Posterior vena cava (tissue), 2 donors: ENCODE measurements at regions of chr9 and their contacts with region 1.

Region 1: DNA sequence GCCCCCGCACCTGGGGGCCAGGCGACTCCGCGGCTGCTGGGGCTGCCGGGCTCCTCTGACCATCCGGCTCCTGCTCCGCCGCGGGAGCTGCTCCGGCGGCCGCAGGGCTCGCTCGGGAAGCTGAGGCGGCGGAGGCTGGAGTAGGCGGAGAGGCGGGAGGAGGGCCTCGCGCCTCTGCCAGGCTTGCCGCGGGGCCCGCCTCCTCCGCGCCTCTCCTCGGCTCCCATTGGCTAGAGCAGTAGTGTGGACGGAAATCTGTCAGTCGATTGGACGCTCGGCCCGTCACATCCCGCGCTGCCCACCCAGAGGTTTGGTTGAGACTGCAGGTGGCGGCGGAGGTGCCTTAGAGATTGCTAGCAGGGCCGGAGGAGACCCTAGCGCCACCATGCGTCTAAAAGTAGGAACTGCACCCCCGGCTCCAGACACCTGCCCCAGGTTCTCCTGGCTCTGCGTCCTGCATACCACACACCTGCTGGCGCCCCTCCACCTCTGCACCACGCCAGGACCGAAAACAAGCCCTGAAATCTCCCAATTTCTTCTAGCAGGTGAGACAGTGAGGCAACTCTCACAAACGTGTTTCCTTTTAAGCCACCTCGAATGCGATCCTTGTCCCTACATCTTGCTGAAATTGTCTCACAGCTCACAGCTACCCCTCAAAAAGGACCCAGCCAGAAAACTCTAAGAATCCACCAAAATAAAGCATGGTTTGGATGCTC is at the start of gene SCAI:
- DNase-seq: peak; percentile 100
- total RNA-seq, gene SCAI: 6.1 to 8.2 TPM

Region 2: GRCh38 chr9:124940693-124941453 is 202.7 kb before region 1 on chr9 and contains the start of gene GOLGA1:
- intact Hi-C with region 1: loop called in 1 of 2 experiments (anchors 10 kb)
- DNase-seq: peak; percentile 99
- total RNA-seq, gene GOLGA1: 21.0 to 21.5 TPM

Region 3: DNA sequence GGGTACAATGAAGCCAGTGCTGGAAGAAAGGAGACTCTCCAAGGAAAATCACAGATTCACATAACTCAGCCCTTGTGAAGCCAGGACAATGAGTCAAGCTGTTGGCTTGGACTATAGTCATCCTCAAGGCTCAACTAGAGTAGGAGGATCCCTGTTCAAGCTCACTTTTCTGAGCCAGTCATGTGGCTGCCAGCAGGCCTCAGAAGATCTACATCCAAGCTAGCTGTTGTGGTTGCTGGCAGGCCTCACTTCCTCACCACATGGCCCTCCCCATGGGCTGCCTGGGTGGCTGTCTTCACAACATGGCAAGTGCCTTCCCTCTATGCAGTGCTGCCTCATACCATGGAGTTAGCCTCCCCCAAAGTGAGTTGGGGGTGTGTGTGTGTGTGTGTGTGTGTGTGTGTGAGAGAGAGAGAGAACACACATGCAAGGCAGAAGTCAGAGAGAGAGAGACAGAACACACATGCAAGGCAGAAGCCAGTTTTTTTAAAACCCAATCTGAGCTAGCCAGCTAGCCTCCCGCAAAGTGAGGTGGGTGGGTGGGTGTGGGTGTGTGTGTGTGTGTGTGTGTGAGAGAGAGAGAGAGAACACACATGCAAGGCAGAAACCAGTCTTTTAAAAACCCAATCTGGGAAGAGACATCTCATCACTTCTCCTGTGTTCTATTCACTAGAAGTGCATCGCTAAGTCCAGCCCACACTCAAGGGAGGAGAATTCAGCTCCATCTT is 17.4 kb before region 1 on chr9:
- intact Hi-C with region 1: loop called in 1 of 2 experiments (anchors 1 kb)
- DNase-seq: peak; percentile 97